Activated CD4-positive, alpha-beta memory T cell treated with anti-CD3 and anti-CD28 coated beads for 36 hours (primary cell): ENCODE measurements at regions of chr1 and their contacts with region 1.

Region 1: GRCh38 chr1:31831397-31832378 is 15.9 kb upstream of the SPOCD1 start:
- DNase-seq: no peak
- H3K4me3 Mint-ChIP-seq: no peak overlapping the region
- H3K27ac Mint-ChIP-seq: no peak overlapping the region
- H3K4me1 Mint-ChIP-seq: peaks cover 17% of the 10 kb centered on the region
- H3K27me3 Mint-ChIP-seq: no peaks in the 10 kb centered on the region

Region 2: DNA sequence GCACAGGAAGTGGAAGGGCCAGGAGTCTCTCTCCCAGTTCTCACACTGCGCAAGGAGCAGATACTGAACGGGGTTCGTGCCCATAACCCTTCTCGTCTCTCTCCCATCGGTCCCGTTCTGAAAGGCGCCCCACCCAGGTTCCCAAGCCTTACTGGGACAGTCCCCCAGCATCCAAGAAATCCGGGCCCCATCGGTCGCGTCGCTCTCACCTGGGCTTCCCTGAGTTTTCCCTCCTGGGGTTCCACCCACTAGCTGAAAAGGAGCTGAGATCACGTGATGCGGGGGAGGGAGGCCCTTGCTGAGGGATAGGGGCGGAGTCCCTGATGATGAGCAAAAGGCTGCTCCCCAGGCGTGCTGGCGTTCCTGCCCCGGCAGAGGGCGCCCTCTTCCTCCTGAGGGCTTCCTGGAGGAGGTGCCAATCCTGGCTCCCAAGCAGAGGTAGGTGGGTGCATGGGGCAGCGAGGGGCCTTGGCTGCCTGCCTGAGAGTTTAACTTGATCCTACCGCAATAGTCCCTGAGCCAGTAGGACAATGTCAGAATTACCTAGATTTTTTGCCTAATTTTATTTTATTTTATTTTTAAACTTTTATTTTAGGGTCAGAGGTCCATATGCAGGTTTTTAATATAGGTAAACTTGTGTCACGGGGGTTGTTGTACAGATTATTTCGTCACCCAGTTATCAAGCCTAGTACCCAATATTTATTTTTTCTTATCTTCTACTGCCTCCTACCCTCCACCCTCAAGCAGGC is 15.8 kb before region 1 on chr1 and contains the start of gene SPOCD1:
- CTCF ChIA-PET with region 1: interaction called, 12 read pairs
- POLR2A ChIA-PET with region 1: no interaction called
- intact Hi-C with region 1: no loop called
- DNase-seq: peak; percentile 93
- H3K4me3 Mint-ChIP-seq: peak within 1 kb of the TSS; percentile 48
- H3K27ac Mint-ChIP-seq: peak within 1 kb of the TSS; percentile 14
- H3K4me1 Mint-ChIP-seq: peaks cover 7% of the 10 kb centered on the region
- H3K27me3 Mint-ChIP-seq: no peaks in the 10 kb centered on the region
- total RNA-seq, gene SPOCD1: 0.73 to 0.78 TPM